K562 (cell line): ENCODE measurements at regions of chr2 and their contacts with region 1.

Region 1: DNA sequence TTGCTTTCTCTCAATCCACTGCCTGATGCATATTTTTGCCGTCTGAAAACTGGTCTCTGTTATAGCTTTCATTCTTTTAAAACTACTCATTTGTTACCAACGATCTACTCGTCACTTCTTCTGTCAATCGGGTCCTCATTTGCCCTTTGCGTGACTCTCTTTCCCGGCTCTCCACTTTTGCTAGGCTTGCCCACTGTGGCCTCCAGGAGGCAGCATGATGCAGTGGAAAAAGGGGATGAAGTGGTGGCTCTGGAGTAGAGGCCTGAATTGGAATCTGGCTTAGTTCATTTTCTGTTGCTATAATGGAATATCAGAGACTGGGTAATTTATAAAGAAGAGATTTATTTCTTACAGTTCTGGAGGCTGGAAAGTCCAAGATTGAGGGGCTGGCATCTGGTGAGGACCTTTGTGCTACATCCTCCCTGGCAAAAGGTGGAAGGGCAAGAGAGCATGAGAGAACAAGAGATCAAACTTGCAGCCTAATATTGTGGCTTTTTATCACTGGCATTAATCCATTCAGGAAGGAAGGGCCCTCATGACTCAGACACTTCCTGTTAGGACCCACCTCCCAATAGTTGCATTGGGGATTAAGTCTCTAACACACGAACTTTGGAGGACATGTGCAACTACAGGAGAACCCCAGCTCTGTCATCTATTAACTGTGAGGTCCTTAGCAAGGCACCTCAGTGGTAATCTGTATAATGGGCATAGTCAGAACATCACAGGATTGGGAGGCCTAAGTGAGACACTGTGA is 15.4 kb downstream of the GDF7 start:
- DNase-seq: peak in 3 of 4 experiments; percentile 21 to 32 (median 29)
- ATAC-seq: peak; percentile 65
- H3K4me3 ChIP-seq: no peak overlapping the region
- H3K27ac ChIP-seq: no peak overlapping the region
- H3K4me1 ChIP-seq: no peaks in the 10 kb centered on the region
- H3K27me3 ChIP-seq: no peaks in the 10 kb centered on the region
- CTCF ChIP-seq: peak; percentile 39 to 72 (median 69); a peak in 5 of 6 replicates
- EP300 ChIP-seq: no peak
- POLR2A ChIP-seq: no peak
- RAD21 ChIP-seq: peak; percentile 23 to 63; a peak in 3 of 4 replicates

Region 2: GRCh38 chr2:20822535-20823490 is 140.5 kb after region 1 on chr2 and contains the start of gene LDAH:
- CTCF ChIA-PET with region 1: no interaction called
- POLR2A ChIA-PET with region 1: no interaction called
- in situ Hi-C with region 1: no loop called
- intact Hi-C with region 1: loop called (anchors 10 kb)
- DNase-seq: peak; percentile 93 to 95 (median 94)
- ATAC-seq: peak; percentile 90
- H3K4me3 ChIP-seq: peak within 1 kb of the TSS; percentile 100
- H3K27ac ChIP-seq: peak within 1 kb of the TSS; percentile 99
- H3K4me1 ChIP-seq: peaks cover 0 to 5% of the 10 kb centered on the region in 2 experiments; a peak in 2 of 5 replicates
- H3K27me3 ChIP-seq: no peaks in the 10 kb centered on the region
- CTCF ChIP-seq: no peak
- EP300 ChIP-seq: peak; percentile 44; the same call in 1 of the 2 replicates
- POLR2A ChIP-seq: peak; percentile 88
- RAD21 ChIP-seq: no peak
- polyA plus RNA-seq, gene LDAH: 38.4 to 44.7 TPM

Region 3: GRCh38 chr2:20916604-20917286 is 234.4 kb after region 1 on chr2:
- CTCF ChIA-PET with region 1: no interaction called
- POLR2A ChIA-PET with region 1: no interaction called
- in situ Hi-C with region 1: no loop called
- intact Hi-C with region 1: loop called (anchors 2 kb)
- DNase-seq: peak in 1 of 4 experiments; percentile 5
- ATAC-seq: peak; percentile 72
- H3K4me3 ChIP-seq: no peak overlapping the region
- H3K27ac ChIP-seq: no peak overlapping the region
- H3K4me1 ChIP-seq: no peaks in the 10 kb centered on the region
- H3K27me3 ChIP-seq: peaks cover 0 to 41% of the 10 kb centered on the region in 2 experiments; a peak in 2 of 5 replicates
- CTCF ChIP-seq: peak; percentile 38 to 52 (median 49); a peak in 5 of 6 replicates
- EP300 ChIP-seq: no peak
- POLR2A ChIP-seq: no peak
- RAD21 ChIP-seq: peak in 1 of 2 experiments; percentile 57; a peak in 2 of 4 replicates

Region 4: GRCh38 chr2:20962939-20963557 is 280.7 kb after region 1 on chr2:
- CTCF ChIA-PET with region 1: interaction called, 14 read pairs
- POLR2A ChIA-PET with region 1: no interaction called
- in situ Hi-C with region 1: no loop called
- intact Hi-C with region 1: loop called (anchors 1 kb)
- DNase-seq: peak; percentile 49 to 72 (median 66)
- ATAC-seq: peak; percentile 89
- H3K4me3 ChIP-seq: no peak overlapping the region
- H3K27ac ChIP-seq: no peak overlapping the region
- H3K4me1 ChIP-seq: no peaks in the 10 kb centered on the region
- H3K27me3 ChIP-seq: peaks cover 0 to 20% of the 10 kb centered on the region in 2 experiments; a peak in 3 of 5 replicates
- CTCF ChIP-seq: peak; percentile 76 to 80 (median 77)
- EP300 ChIP-seq: no peak
- POLR2A ChIP-seq: no peak
- RAD21 ChIP-seq: peak; percentile 68 to 86